Activated CD4-positive, alpha-beta T cell treated with anti-CD3 and anti-CD28 coated beads, Interleukin-2, amount 10 ng/mL, durations not matched to agents 24 days and 14 days (primary cell): ENCODE measurements at regions of chr16 and their contacts with region 1.

Region 1: GRCh38 chr16:10322723-10323527 is 62.9 kb upstream of the ATF7IP2 start:
- DNase-seq: no peak
- H3K4me3 Mint-ChIP-seq: no peak overlapping the region
- H3K27ac Mint-ChIP-seq: no peak overlapping the region
- H3K4me1 Mint-ChIP-seq: peaks cover 20% of the 10 kb centered on the region
- H3K27me3 Mint-ChIP-seq: no peaks in the 10 kb centered on the region

Region 2: DNA sequence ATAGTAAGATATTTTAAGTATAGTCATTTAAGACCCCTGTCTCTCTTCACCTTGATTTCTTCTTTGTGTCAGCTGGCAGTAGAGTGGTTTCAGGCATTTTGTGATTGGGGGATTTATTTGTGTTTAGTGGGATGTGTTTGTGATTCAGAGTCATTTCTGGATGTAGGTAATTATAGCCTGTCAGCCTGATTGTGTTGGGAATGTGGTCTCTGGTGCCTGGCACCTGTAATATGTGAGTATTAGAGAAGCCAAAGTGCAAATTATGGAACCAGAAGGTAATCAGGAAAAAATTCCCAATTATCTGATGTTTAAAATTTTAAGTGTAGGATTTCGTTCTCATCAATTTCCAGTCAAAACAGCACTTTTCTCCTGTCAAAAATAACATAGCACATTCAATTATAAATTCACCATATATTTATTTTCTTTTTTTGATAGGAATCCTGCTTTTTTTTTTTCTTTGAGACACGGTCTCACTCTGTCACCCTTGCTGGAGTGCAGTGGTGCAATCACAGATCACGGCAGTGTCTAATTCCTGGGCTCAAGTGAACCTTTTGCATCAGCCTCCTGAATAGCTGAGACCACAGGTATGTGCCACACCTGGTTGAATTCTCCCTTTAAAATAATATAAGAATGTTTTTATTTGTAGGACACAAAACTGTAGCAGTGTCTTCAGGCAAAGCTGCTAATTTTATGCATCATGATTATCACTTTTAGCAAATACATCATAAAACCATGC is 105.7 kb after region 1 on chr16:
- intact Hi-C with region 1: no loop called
- DNase-seq: no peak
- H3K4me3 Mint-ChIP-seq: no peak overlapping the region
- H3K27ac Mint-ChIP-seq: peak overlapping the region; percentile 8
- H3K4me1 Mint-ChIP-seq: no peaks in the 10 kb centered on the region
- H3K27me3 Mint-ChIP-seq: no peaks in the 10 kb centered on the region

Region 3: GRCh38 chr16:10501016-10501607 is 178.2 kb after region 1 on chr16:
- intact Hi-C with region 1: loop called (anchors 2 kb)
- DNase-seq: peak; percentile 73
- H3K4me3 Mint-ChIP-seq: no peak overlapping the region
- H3K27ac Mint-ChIP-seq: no peak overlapping the region
- H3K4me1 Mint-ChIP-seq: peaks cover 5% of the 10 kb centered on the region
- H3K27me3 Mint-ChIP-seq: no peaks in the 10 kb centered on the region

Region 4: GRCh38 chr16:10708969-10709368 is 386.0 kb after region 1 on chr16:
- intact Hi-C with region 1: loop called (anchors 5 kb)
- DNase-seq: peak; percentile 54
- H3K4me3 Mint-ChIP-seq: no peak overlapping the region
- H3K27ac Mint-ChIP-seq: no peak overlapping the region
- H3K4me1 Mint-ChIP-seq: no peaks in the 10 kb centered on the region
- H3K27me3 Mint-ChIP-seq: no peaks in the 10 kb centered on the region